HepG2 (cell line): ENCODE measurements at regions of chr11 and their contacts with region 1.

Region 1: DNA sequence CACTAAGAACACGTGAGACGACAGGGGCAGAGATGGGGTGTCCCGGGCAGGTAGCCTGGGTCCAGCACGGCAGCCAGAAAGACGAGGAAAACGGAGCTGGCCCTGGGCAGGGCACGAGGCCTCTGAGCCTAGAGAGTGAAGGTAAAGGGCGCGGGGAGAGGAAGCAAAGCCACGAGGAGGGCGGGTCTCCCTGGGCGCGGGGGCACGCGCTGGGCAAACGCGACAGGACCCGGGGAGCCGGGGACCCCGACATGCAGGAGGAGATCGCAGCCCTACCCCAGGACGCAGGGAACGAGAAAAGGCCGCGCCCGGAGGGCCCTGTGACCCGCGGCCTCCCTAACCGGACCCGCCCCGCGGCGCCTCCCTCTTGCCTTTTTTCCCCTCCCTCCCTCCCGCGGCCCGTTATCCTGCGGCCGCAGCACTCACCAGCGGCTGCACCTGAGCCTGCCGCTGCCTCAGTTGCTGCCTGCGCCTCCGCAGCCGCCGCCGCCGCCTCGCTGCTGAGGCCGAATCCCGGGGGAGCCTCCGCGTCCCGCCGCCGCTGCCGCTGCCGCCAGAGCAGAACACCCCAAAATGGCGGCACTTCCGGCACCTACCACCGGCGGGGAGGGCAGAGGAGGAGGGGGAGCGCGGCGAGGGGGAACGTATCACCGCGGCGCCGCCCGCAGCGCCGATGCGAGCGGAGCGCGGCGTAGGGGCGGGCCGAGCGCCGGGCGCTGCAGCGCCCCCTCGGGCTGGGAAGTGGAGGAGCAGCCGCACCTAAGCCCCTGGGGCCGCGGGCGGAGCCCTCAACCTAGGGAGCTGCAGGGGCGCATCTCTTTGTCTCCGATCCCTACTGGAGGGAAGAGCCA is at the start of gene CELF1:
- DNase-seq: peak; percentile 77
- ATAC-seq: peak; percentile 93
- H3K4me3 ChIP-seq: peak within 1 kb of the TSS; percentile 69 to 98 (median 69)
- H3K27ac ChIP-seq: peak within 1 kb of the TSS; percentile 81
- H3K4me1 ChIP-seq: peaks cover 43% of the 10 kb centered on the region
- H3K27me3 ChIP-seq: no peaks in the 10 kb centered on the region
- CTCF ChIP-seq: peak; percentile 82
- EP300 ChIP-seq: no peak
- POLR2A ChIP-seq: peak; percentile 42 to 82; a peak in 3 of 4 replicates
- RAD21 ChIP-seq: peak; percentile 63
- total RNA-seq, gene CELF1: 80.1 and 93.4 TPM in 2 replicates

Region 2: GRCh38 chr11:47485110-47485509 is 67.7 kb before region 1 on chr11:
- CTCF ChIA-PET with region 1: no interaction called
- POLR2A ChIA-PET with region 1: no interaction called
- in situ Hi-C with region 1: no loop called
- intact Hi-C with region 1: loop called (anchors 5 kb)
- DNase-seq: no peak
- ATAC-seq: no peak
- H3K4me3 ChIP-seq: no peak overlapping the region
- H3K27ac ChIP-seq: no peak overlapping the region
- H3K4me1 ChIP-seq: peaks cover 25% of the 10 kb centered on the region
- H3K27me3 ChIP-seq: no peaks in the 10 kb centered on the region
- CTCF ChIP-seq: no peak
- EP300 ChIP-seq: no peak
- POLR2A ChIP-seq: no peak
- RAD21 ChIP-seq: no peak

Region 3: GRCh38 chr11:47565340-47566148 is 12.8 kb after region 1 on chr11 and contains the start of gene PTPMT1:
- CTCF ChIA-PET with region 1: no interaction called
- POLR2A ChIA-PET with region 1: interaction called, 19 read pairs
- in situ Hi-C with region 1: no loop called
- intact Hi-C with region 1: no loop called
- DNase-seq: peak; percentile 68
- ATAC-seq: peak; percentile 98
- H3K4me3 ChIP-seq: peak within 1 kb of the TSS; percentile 87 to 97 (median 97)
- H3K27ac ChIP-seq: peak within 1 kb of the TSS; percentile 85
- H3K4me1 ChIP-seq: peaks cover 26% of the 10 kb centered on the region
- H3K27me3 ChIP-seq: no peaks in the 10 kb centered on the region
- CTCF ChIP-seq: no peak; the same call in 1 of the 2 replicates
- EP300 ChIP-seq: no peak
- POLR2A ChIP-seq: peak; percentile 79
- RAD21 ChIP-seq: no peak; the same call in 1 of the 2 replicates
- total RNA-seq, gene PTPMT1: 91.5 and 129 TPM in 2 replicates